Psoas muscle (tissue), 8 donors: ENCODE measurements at regions of chr12 and their contacts with region 1.

Region 1: GRCh38 chr12:62192180-62192902 is 67.9 kb upstream of the USP15 start:
- DNase-seq: peak; percentile 18 to 52
- ATAC-seq: peak; percentile 71 to 95 (median 84)
- H3K4me3 ChIP-seq: peak overlapping the region; percentile 57
- H3K27ac ChIP-seq: no peak overlapping the region
- H3K4me1 ChIP-seq: peaks cover 14% of the 10 kb centered on the region
- H3K27me3 ChIP-seq: peaks cover 0 to 42% (median 3%) of the 10 kb centered on the region in 3 donors
- CTCF ChIP-seq: peak; percentile 65

Region 2: GRCh38 chr12:62006076-62006732 is 186.1 kb before region 1 on chr12:
- intact Hi-C with region 1: loop called in 1 of 2 experiments (anchors 10 kb)
- DNase-seq: no peak
- ATAC-seq: no peak
- H3K4me3 ChIP-seq: no peak overlapping the region
- H3K27ac ChIP-seq: no peak overlapping the region
- H3K4me1 ChIP-seq: no peaks in the 10 kb centered on the region
- H3K27me3 ChIP-seq: no peaks in the 10 kb centered on the region
- CTCF ChIP-seq: peak; percentile 56

Region 3: DNA sequence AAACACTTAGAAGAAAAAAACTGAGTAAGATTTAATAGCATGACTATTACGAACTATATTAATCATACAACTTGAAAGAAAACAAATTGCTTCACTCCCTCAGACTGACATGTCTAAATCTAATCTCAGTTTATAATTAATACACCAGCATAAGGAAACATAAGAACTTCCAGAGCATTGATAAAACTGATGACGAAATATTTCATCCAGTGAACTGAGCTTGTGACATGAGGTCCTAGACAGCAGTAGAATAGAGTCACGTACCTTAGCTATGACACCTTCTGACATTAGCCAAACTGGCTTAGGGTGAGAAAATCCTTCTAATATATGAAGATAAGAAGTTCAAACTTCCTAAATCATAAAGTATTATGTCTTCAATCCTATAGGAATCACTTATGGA is 10.9 kb before region 1 on chr12:
- intact Hi-C with region 1: no loop called
- DNase-seq: no peak
- ATAC-seq: no peak
- H3K4me3 ChIP-seq: no peak overlapping the region
- H3K27ac ChIP-seq: no peak overlapping the region
- H3K4me1 ChIP-seq: no peaks in the 10 kb centered on the region
- H3K27me3 ChIP-seq: peaks cover 0 to 7% (median 0%) of the 10 kb centered on the region in 3 donors
- CTCF ChIP-seq: no peak